ENCODE measurements at regions of chr2 and their contacts with region 1.

Region 1: DNA sequence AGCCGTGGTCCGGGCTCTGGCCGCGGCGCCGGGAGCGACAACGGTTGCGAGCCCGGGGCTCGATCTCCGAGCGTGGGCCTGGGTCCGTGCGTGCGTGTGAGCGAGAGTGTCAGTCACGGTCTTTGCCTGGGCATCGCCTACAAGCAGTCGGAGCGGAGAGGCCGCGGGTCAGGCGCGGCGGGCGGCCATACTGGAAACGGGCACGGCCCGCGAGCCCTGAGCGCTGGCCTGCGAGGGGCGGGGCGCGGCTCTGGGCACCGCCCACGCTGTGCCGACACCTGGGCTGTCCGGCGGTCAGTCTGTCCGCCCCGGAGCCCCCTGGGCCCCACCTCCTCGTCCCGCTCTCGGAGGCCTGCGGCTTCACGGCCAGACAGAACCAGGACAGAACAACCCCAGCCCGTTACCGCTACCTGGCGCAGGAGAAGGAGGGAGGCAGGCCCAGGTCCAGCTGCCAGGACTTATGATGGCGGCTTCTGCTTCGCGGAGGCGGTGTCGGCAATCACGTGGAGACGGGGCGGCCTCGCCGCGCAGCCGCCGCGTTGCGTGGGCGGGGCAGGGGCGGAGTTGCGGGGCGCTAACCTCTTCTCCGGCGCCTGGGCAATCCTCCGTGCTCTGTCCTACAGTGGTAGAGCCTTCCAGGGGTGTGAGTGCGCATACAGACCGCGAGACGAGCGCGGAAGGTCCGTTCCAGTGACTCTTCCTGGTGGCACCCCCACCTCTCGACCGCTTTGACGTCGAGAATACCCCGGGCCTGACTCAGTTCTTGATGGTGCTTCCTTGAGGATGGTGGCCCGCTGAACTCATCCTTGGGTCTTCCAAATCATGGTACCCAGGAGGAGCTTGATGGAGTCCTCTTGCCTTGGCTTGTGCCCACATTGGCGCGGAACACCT is at the start of gene TMEM131:
- DNase-seq: peak; percentile 99
- H3K4me3 Mint-ChIP-seq: peak within 1 kb of the TSS; percentile 97
- H3K27ac Mint-ChIP-seq: peak within 1 kb of the TSS; percentile 98
- H3K4me1 Mint-ChIP-seq: peaks cover 29% of the 10 kb centered on the region
- H3K27me3 Mint-ChIP-seq: peaks cover 9% of the 10 kb centered on the region
- total RNA-seq, gene TMEM131: 41.7 and 44.1 TPM in 2 replicates

Region 2: GRCh38 chr2:97718051-97718882 is 277.7 kb before region 1 on chr2:
- intact Hi-C with region 1: loop called (anchors 10 kb)
- DNase-seq: peak; percentile 92
- H3K4me3 Mint-ChIP-seq: peak overlapping the region; percentile 92
- H3K27ac Mint-ChIP-seq: peak overlapping the region; percentile 86
- H3K4me1 Mint-ChIP-seq: peaks cover 71% of the 10 kb centered on the region
- H3K27me3 Mint-ChIP-seq: no peaks in the 10 kb centered on the region

Region 3: DNA sequence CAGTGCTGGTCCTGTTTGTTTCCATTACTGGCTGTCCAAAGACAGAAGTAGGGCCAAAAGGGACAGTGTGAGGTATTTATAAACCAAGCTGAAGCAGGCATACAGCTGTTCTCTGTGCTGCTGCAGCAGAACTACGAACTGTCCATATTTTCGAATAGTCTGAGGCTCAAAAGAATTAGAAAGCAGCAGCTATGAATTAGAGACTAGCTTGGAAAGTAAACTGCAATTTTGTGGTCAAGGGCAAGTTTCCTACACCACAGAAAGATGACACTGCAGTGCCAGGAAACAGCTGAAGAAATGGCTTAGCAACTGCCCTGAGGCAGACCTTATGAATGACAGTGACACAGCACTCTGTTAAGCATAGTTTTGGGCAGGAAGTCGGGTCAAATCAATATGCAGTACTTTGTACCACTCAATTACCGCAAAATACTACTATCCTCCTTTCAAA is 125.6 kb before region 1 on chr2:
- intact Hi-C with region 1: loop called (anchors 1 kb)
- DNase-seq: peak; percentile 89
- H3K4me3 Mint-ChIP-seq: peak overlapping the region; percentile 17
- H3K27ac Mint-ChIP-seq: peak overlapping the region; percentile 57
- H3K4me1 Mint-ChIP-seq: peaks cover 25% of the 10 kb centered on the region
- H3K27me3 Mint-ChIP-seq: no peaks in the 10 kb centered on the region

Region 4: GRCh38 chr2:97890093-97890492 is 105.9 kb before region 1 on chr2:
- intact Hi-C with region 1: no loop called
- DNase-seq: no peak
- H3K4me3 Mint-ChIP-seq: no peak overlapping the region
- H3K27ac Mint-ChIP-seq: no peak overlapping the region
- H3K4me1 Mint-ChIP-seq: no peaks in the 10 kb centered on the region
- H3K27me3 Mint-ChIP-seq: no peaks in the 10 kb centered on the region

Region 5: GRCh38 chr2:97966518-97967215 is 29.3 kb before region 1 on chr2:
- intact Hi-C with region 1: loop called (anchors 5 kb)
- DNase-seq: no peak
- H3K4me3 Mint-ChIP-seq: no peak overlapping the region
- H3K27ac Mint-ChIP-seq: no peak overlapping the region
- H3K4me1 Mint-ChIP-seq: peaks cover 38% of the 10 kb centered on the region
- H3K27me3 Mint-ChIP-seq: no peaks in the 10 kb centered on the region

Region 6: GRCh38 chr2:98006378-98006777 is 10.4 kb after region 1 on chr2:
- intact Hi-C with region 1: no loop called
- DNase-seq: no peak
- H3K4me3 Mint-ChIP-seq: no peak overlapping the region
- H3K27ac Mint-ChIP-seq: no peak overlapping the region
- H3K4me1 Mint-ChIP-seq: peaks cover 12% of the 10 kb centered on the region
- H3K27me3 Mint-ChIP-seq: peaks cover 5% of the 10 kb centered on the region

Region 7: DNA sequence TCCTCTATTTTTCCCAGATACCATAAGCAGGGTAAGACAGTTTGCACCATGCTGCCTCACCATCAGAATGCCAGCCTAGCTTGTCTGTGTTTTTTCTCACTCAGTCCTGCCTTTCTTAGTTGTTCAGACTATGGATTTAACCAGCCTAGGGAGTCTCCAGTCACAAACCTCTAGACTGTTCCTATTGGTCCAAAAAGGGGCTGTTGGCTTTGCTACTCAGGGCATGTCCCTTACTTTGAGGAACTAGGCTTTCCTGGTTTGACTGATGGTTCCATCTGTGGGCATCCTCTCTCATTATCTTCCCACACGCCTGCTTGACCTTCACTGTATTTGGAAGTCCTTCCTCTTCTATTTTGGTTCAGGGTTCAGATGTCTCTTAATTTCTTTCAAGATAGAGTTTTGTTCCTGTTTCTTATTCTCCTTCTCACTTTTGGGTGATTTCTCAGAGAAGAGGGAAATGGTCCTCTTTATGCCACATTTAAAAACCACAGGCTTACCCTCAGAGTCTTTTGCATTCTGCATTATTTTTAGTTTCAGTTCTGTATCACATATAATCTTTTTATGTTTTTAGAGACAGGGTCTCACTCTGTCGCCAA is 31.0 kb after region 1 on chr2:
- intact Hi-C with region 1: no loop called
- DNase-seq: no peak
- H3K4me3 Mint-ChIP-seq: peak overlapping the region; percentile 58
- H3K27ac Mint-ChIP-seq: peak overlapping the region; percentile 58
- H3K4me1 Mint-ChIP-seq: peaks cover 17% of the 10 kb centered on the region
- H3K27me3 Mint-ChIP-seq: peaks cover 5% of the 10 kb centered on the region

Measured in activated CD4-positive, alpha-beta T cell treated with anti-CD3 and anti-CD28 coated beads, Interleukin-2, amount 10 ng/mL, durations not matched to agents 24 days and 14 days (primary cell).